ENCODE measurements at regions of chr2 and their contacts with region 1.

Region 1: DNA sequence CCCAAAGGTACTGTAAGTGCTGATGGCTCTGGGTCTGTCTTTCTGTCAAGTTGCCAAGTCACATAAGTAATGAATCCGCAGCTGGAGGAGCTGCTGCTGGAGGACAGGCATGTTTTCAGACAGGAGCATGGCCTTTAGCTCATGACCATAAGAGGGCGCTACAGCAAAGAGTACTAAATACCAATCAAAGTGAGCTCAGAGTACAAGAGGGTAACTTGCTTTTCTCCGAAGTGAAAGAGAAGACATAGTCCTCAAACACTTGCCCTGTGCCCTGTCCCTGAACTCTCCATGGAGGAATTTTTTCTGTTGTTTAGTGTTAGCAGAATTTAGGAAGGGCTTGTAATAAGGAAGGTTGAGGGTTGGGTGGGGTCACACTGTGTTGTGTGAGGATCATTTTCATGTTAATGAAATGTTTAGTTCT is 58.0 kb upstream of the EML6 start:
- DNase-seq: no peak
- ATAC-seq: peak; percentile 52
- H3K4me3 Mint-ChIP-seq: no peak overlapping the region
- H3K27ac Mint-ChIP-seq: no peak overlapping the region
- H3K4me1 Mint-ChIP-seq: no peaks in the 10 kb centered on the region
- H3K27me3 Mint-ChIP-seq: no peaks in the 10 kb centered on the region
- CTCF ChIP-seq: no peak

Region 2: GRCh38 chr2:54629390-54629789 is 36.1 kb before region 1 on chr2:
- CTCF ChIA-PET with region 1: no interaction called
- POLR2A ChIA-PET with region 1: no interaction called
- intact Hi-C with region 1: no loop called
- DNase-seq: no peak
- ATAC-seq: no peak
- H3K4me3 Mint-ChIP-seq: no peak overlapping the region
- H3K27ac Mint-ChIP-seq: no peak overlapping the region
- H3K4me1 Mint-ChIP-seq: peaks cover 29% of the 10 kb centered on the region
- H3K27me3 Mint-ChIP-seq: no peaks in the 10 kb centered on the region
- CTCF ChIP-seq: no peak

Region 3: DNA sequence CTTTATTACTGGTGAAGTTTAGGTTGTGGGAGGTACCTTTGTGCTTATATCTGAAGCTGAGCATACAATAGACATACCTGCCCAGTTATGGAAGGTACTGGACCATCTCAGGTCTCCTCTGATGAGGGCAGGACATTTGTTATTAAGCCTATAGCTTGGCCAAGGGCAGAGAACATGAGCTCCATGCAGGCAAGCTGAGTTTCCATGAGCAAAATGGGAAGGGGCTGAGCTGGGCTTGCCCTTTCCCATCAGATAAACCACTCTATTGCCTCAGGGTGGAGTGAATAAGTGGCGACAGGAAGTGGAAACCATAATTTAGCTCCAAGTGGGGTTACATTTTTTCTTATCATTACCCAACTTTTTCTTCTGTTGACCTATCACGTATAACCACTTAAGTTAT is 18.1 kb after region 1 on chr2:
- CTCF ChIA-PET with region 1: interaction called, 7 read pairs
- POLR2A ChIA-PET with region 1: interaction called, 13 read pairs
- intact Hi-C with region 1: no loop called
- DNase-seq: no peak
- ATAC-seq: no peak
- H3K4me3 Mint-ChIP-seq: no peak overlapping the region
- H3K27ac Mint-ChIP-seq: no peak overlapping the region
- H3K4me1 Mint-ChIP-seq: peaks cover 13% of the 10 kb centered on the region
- H3K27me3 Mint-ChIP-seq: peaks cover 4% of the 10 kb centered on the region
- CTCF ChIP-seq: no peak

Region 4: DNA sequence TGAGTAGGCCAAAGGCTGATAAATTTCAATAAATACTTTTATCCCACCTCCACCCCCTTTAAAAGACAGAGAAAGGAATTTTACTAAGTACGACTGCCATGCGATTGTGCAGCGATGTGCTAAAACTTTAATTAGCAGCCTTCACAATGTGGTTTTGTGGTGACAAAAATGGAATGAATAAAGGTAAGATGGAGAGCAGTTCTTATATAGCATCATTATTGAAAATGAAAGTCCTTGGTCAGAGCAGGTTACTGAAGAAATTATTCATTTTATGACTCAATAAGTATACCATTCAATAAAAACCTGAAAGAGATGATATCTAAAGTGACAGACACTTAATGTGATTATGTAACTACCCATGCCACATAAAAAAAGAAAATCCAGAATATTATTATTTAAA is 636.8 kb after region 1 on chr2:
- CTCF ChIA-PET with region 1: no interaction called
- POLR2A ChIA-PET with region 1: no interaction called
- intact Hi-C with region 1: no loop called
- DNase-seq: no peak
- ATAC-seq: no peak
- H3K4me3 Mint-ChIP-seq: no peak overlapping the region
- H3K27ac Mint-ChIP-seq: no peak overlapping the region
- H3K4me1 Mint-ChIP-seq: no peaks in the 10 kb centered on the region
- H3K27me3 Mint-ChIP-seq: no peaks in the 10 kb centered on the region
- CTCF ChIP-seq: no peak

Measured in activated B cell treated with CpG ODN at 0.5 μM for 24 hours (primary cell).